ENCODE measurements at regions of chr21 and their contacts with region 1.

Region 1: DNA sequence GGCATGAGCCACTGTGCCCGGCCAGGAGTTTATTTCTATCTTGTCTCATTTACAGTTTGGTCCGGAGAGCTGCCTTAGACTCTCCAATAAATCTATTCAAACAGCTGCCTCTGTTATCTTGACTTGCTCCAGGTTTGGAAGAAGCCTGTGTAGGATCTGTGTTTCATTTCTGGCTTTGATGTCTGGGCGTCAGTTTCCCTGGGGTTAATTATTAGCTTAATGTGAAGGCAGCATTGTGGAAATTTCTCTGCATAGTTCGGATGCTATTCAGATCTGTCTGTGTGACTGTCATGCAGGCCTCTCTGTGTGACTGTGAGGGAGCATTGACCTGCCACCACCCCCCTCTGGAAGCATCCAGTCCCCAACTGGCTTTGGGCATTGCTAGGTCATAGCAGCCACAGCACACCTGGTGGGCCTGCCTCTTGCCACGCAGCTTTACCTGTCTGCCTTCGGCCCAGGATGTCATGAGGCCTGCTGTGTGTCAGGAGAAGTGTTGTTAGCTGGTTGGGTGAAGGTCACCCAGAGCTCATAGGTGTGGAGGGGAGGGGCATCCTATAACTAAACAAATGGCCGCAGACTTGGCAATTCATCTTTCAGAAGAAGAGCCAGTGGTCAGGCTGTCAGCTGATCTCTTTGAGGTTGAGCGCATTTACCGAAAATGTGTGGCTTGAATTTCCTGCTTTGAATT is 9.8 kb downstream of the IFNGR2 start:
- DNase-seq: no peak
- ATAC-seq: peak; percentile 84
- H3K4me3 ChIP-seq: peak overlapping the region; percentile 10; the same call in 1 of the 2 replicates
- H3K27ac ChIP-seq: peak overlapping the region; percentile 22; the same call in 1 of the 2 replicates
- H3K4me1 ChIP-seq: peaks cover 22% of the 10 kb centered on the region
- H3K27me3 ChIP-seq: no peaks in the 10 kb centered on the region
- CTCF ChIP-seq: no peak
- EP300 ChIP-seq: no peak
- POLR2A ChIP-seq: peak; percentile 57
- RAD21 ChIP-seq: no peak

Region 2: DNA sequence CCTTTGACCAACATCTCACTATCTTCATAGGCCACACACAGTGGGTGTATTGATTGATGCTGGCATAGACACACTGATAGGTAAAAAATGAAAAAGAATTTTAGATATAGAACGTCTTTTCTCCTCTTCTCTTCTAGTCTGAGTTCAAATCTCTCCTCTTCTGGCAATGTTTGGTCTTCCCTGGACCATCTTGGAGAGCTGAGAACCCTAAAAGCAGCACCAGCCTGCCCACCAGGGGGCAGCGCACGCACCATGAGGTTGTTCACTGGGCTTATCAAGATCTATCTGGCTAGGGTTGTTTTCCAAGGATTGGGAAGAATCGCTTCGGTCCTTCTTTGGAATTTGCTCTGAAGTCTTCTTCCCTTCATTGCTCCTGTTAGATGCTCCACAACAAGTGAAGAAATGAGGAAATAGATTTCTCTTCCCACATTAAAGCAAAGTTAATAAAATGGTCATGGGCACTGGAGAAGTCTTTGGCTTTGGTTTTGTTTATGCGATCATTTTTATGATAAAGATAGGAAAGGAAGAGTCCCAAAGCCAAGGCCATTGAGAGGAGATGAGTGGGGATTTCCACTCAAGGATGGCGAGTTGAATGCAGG is 491.2 kb before region 1 on chr21:
- CTCF ChIA-PET with region 1: no interaction called
- POLR2A ChIA-PET with region 1: no interaction called
- RAD21 ChIA-PET with region 1: no interaction called
- SMC1A ChIA-PET with region 1: no interaction called
- in situ Hi-C with region 1: no loop called
- intact Hi-C with region 1: no loop called
- DNase-seq: no peak
- ATAC-seq: peak; percentile 48; the same call in 2 of the 3 replicates
- H3K4me3 ChIP-seq: no peak overlapping the region
- H3K27ac ChIP-seq: no peak overlapping the region
- H3K4me1 ChIP-seq: no peaks in the 10 kb centered on the region
- H3K27me3 ChIP-seq: no peaks in the 10 kb centered on the region
- CTCF ChIP-seq: peak; percentile 42 to 56 (median 42); a peak in 5 of 6 replicates
- EP300 ChIP-seq: no peak
- POLR2A ChIP-seq: no peak
- RAD21 ChIP-seq: peak; percentile 51

Region 3: DNA sequence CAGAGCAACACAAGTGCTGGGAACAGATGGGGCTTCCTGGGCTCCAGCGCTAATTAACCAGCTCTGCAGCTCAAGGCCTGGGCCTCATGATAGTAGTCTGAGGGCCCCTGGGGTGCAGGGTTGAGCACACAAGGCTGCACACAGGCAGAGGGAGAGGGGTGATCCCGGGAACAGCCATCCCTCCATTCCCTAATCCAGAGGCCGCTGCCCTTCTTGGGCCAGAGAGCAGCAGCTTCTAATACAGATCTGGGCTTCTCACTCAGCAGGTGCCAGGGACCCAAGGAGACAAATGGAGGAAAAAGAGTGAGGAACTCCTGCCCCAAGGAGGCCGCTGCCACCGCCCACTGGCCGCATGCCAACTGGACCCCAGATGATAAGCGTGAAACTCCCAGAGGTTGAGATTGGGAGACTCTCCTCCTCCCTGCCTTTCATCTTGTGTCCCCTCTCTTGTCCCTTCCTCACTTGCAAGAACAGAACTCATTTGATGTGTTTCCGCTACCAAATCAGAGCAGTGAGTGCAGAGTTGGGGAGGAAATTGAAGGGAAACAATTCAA is 241.3 kb before region 1 on chr21:
- CTCF ChIA-PET with region 1: no interaction called
- POLR2A ChIA-PET with region 1: no interaction called
- RAD21 ChIA-PET with region 1: no interaction called
- SMC1A ChIA-PET with region 1: no interaction called
- in situ Hi-C with region 1: no loop called
- intact Hi-C with region 1: no loop called
- DNase-seq: no peak
- ATAC-seq: no peak
- H3K4me3 ChIP-seq: no peak overlapping the region
- H3K27ac ChIP-seq: no peak overlapping the region
- H3K4me1 ChIP-seq: no peaks in the 10 kb centered on the region
- H3K27me3 ChIP-seq: peaks cover 0 to 2% of the 10 kb centered on the region in 2 experiments; a peak in 3 of 4 replicates
- CTCF ChIP-seq: no peak
- EP300 ChIP-seq: no peak
- POLR2A ChIP-seq: no peak
- RAD21 ChIP-seq: no peak

Region 4: DNA sequence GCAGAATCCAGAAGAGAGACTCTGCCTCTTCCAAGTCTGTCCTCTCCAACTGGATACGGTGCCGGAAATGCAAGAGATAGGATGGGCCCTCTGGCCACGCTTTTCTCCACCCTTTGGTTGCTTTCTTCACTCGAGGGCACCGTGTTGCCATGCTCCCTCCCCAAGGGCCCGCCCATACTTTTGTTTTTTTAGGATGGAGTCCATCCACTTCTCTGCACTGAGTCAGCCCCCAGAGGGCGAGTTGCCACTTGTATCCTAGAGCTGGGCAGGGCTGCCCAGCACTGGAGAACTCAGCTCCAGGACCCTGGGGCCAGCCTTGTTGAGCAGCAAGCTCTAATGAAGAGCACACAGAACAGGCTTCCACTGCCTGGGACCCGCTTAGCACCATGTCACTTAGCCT is 15.7 kb after region 1 on chr21:
- CTCF ChIA-PET with region 1: interaction called, 3 read pairs
- POLR2A ChIA-PET with region 1: interaction called, 8 read pairs
- RAD21 ChIA-PET with region 1: interaction called, 69 read pairs
- SMC1A ChIA-PET with region 1: interaction called, 29 read pairs
- in situ Hi-C with region 1: no loop called
- intact Hi-C with region 1: no loop called
- DNase-seq: no peak
- ATAC-seq: no peak
- H3K4me3 ChIP-seq: no peak overlapping the region
- H3K27ac ChIP-seq: no peak overlapping the region
- H3K4me1 ChIP-seq: peaks cover 21% of the 10 kb centered on the region
- H3K27me3 ChIP-seq: no peaks in the 10 kb centered on the region
- CTCF ChIP-seq: no peak
- EP300 ChIP-seq: no peak
- POLR2A ChIP-seq: no peak
- RAD21 ChIP-seq: no peak

Measured in GM12878 (cell line).